Activated CD4-positive, alpha-beta T cell treated with anti-CD3 and anti-CD28 coated beads for 36 hours (primary cell): ENCODE measurements at regions of chr3 and their contacts with region 1.

Region 1: DNA sequence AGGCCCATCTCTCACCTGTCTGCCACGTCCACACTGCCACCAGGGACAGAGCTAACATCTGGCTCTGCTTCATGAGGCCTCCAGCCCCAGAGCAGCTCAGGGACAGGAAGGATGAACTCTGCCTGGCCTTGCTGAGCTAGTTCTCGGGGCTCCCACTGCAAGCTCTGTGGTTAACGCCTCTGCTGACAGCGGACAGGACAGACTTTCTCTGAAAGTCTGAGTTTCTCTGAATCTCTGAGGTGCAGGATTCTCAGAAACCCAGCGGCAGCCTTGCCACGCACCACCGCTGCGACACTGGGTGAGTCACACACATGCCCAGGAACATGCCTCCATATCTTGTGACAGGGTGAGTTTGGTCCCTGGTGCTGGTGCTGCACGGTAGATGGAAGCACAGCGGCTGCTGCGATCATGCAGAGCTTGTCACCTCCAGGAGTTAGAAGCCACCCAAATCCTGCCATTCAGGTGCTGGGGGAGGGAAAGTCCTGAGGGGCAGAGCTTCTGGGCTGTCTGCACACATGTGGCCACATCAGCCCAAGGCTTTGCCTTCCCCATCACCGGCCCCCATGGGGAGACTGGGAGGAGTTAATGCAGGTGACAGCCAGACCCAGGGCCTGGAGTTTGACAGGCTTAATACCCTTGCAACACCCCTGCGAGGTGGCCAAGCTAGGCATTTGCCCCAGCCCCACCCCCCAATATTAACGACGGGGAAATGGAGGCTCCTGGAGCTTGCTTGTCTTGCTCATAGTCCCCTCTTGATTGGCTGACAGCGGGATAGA is 267.0 kb downstream of the PLCL2 start:
- DNase-seq: peak; percentile 94
- ATAC-seq: peak; percentile 94
- H3K4me3 Mint-ChIP-seq: peak overlapping the region; percentile 52
- H3K27ac Mint-ChIP-seq: peak overlapping the region; percentile 88
- H3K4me1 Mint-ChIP-seq: peaks cover 29% of the 10 kb centered on the region
- H3K27me3 Mint-ChIP-seq: no peaks in the 10 kb centered on the region

Region 2: DNA sequence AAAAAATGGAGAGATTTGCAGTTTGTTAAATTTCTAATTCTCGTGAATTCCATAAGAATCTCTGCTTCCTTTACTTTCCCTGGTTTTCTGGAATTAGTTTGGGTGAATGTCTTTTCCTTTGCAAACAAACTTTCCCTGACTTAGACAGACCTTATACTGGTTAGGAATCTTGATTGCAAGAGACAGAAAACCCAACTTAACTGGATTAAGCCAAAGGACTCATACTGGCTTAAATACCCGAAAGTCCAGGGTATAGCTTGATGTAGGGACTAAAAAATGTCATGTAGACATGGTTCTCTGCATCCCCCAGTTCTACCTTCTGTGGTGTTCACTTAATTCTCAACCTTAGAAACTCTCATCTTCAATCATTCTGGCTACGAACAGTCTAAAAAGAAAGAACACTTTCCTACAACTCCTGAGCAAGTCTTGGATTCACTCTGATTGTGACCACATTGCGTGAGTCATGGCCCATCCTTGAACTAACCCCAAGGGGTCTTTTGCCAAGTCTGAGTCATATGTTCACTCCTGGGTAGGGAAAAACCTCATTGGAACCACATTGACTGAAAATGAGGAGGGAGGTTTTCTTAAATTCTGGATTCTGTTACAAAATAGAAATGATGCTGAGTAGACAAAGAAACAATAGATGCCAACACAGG is 410.6 kb before region 1 on chr3:
- CTCF ChIA-PET with region 1: no interaction called
- POLR2A ChIA-PET with region 1: no interaction called
- intact Hi-C with region 1: loop called in 1 of 2 experiments (anchors 5 kb)
- DNase-seq: peak; percentile 65
- ATAC-seq: peak; percentile 79
- H3K4me3 Mint-ChIP-seq: no peak overlapping the region
- H3K27ac Mint-ChIP-seq: no peak overlapping the region
- H3K4me1 Mint-ChIP-seq: peaks cover 12% of the 10 kb centered on the region
- H3K27me3 Mint-ChIP-seq: peaks cover 2% of the 10 kb centered on the region

Region 3: GRCh38 chr3:16828815-16829214 is 323.0 kb before region 1 on chr3:
- CTCF ChIA-PET with region 1: interaction called, 3 read pairs
- POLR2A ChIA-PET with region 1: no interaction called
- intact Hi-C with region 1: loop called in 1 of 2 experiments (anchors 1 kb)
- DNase-seq: peak; percentile 73
- ATAC-seq: peak; percentile 51
- H3K4me3 Mint-ChIP-seq: no peak overlapping the region
- H3K27ac Mint-ChIP-seq: no peak overlapping the region
- H3K4me1 Mint-ChIP-seq: peaks cover 16% of the 10 kb centered on the region
- H3K27me3 Mint-ChIP-seq: no peaks in the 10 kb centered on the region

Region 4: GRCh38 chr3:16842272-16843270 is 309.2 kb before region 1 on chr3:
- CTCF ChIA-PET with region 1: no interaction called
- POLR2A ChIA-PET with region 1: no interaction called
- intact Hi-C with region 1: loop called in 1 of 2 experiments (anchors 1 kb)
- DNase-seq: peak; percentile 87
- ATAC-seq: peak; percentile 96
- H3K4me3 Mint-ChIP-seq: peak overlapping the region; percentile 69
- H3K27ac Mint-ChIP-seq: peak overlapping the region; percentile 95
- H3K4me1 Mint-ChIP-seq: peaks cover 75% of the 10 kb centered on the region
- H3K27me3 Mint-ChIP-seq: no peaks in the 10 kb centered on the region

Region 5: DNA sequence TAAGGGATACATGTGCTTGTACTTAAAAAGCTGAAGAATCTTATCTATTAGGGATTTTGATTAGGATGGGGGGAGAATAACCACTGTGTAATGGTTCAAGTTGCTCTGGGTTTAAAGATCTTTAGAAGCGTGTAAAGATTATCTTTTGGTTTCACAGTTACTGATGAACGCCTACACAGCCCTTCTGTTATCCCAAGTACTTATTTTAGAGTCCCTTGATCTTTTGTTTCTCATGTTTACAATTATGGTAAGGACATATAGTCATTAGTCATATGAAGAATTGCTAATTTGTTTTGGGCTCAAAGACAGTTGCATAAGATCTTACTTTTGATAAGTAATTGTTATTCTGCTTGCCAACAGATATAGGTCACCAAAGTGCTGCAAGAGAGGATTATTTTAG is 106.9 kb before region 1 on chr3:
- CTCF ChIA-PET with region 1: no interaction called
- POLR2A ChIA-PET with region 1: no interaction called
- intact Hi-C with region 1: loop called in 1 of 2 experiments (anchors 5 kb)
- DNase-seq: no peak
- ATAC-seq: peak; percentile 73
- H3K4me3 Mint-ChIP-seq: no peak overlapping the region
- H3K27ac Mint-ChIP-seq: no peak overlapping the region
- H3K4me1 Mint-ChIP-seq: peaks cover 26% of the 10 kb centered on the region
- H3K27me3 Mint-ChIP-seq: no peaks in the 10 kb centered on the region

Region 6: DNA sequence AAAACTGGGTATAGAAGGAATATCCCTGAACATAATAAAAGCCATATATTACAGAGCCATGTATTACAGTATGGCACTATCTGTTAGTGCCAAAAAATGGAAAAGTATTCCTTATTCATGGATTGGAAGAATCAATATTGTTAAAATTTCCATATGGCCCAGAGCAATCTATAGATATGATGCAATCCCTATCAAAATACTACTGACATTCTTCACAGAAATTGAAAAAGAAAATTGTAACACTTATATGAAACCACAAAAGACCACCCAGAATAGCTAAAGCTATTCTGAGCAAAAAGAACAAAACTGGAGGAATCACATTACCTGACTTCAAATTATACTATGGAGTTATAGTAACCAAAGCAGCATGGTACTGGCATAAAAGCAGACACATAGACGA is 48.2 kb before region 1 on chr3:
- CTCF ChIA-PET with region 1: no interaction called
- POLR2A ChIA-PET with region 1: no interaction called
- intact Hi-C with region 1: no loop called
- DNase-seq: no peak
- ATAC-seq: no peak
- H3K4me3 Mint-ChIP-seq: no peak overlapping the region
- H3K27ac Mint-ChIP-seq: no peak overlapping the region
- H3K4me1 Mint-ChIP-seq: peaks cover 3% of the 10 kb centered on the region
- H3K27me3 Mint-ChIP-seq: no peaks in the 10 kb centered on the region

Region 7: DNA sequence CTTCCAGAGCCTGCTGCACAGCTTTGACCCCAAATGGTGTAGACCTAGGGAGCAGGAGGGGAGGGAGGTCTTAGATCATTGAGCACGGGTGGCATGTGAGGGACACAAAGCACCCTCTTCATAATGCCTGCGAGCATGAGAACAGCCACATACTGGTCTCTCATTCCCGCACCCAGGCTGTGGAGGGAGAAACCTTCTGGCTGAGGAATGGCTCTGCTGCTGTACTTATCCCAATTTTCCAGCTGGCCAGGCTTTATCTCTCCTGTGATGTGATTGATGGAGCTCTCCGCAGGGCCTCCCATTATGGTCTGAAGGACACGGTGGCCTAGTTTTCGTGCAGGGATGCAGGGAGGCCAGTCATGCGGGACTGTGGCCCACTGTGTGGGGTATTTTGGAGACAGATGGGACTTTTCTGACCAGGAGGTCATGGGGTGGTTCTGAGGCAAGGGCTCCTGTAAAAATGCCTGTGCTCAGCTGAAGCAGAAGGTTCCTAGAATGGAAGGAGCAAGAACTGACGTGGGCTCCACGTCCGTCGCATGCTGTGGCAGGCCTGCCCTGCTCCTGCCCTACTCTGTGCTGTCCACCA is 15.6 kb before region 1 on chr3:
- CTCF ChIA-PET with region 1: no interaction called
- POLR2A ChIA-PET with region 1: no interaction called
- intact Hi-C with region 1: no loop called
- DNase-seq: no peak
- ATAC-seq: no peak
- H3K4me3 Mint-ChIP-seq: no peak overlapping the region
- H3K27ac Mint-ChIP-seq: no peak overlapping the region
- H3K4me1 Mint-ChIP-seq: no peaks in the 10 kb centered on the region
- H3K27me3 Mint-ChIP-seq: no peaks in the 10 kb centered on the region

Region 8: GRCh38 chr3:17233398-17233800 is 81.6 kb after region 1 on chr3:
- CTCF ChIA-PET with region 1: no interaction called
- POLR2A ChIA-PET with region 1: no interaction called
- intact Hi-C with region 1: loop called in 1 of 2 experiments (anchors 5 kb)
- DNase-seq: peak; percentile 47
- ATAC-seq: peak; percentile 91
- H3K4me3 Mint-ChIP-seq: no peak overlapping the region
- H3K27ac Mint-ChIP-seq: no peak overlapping the region
- H3K4me1 Mint-ChIP-seq: peaks cover 24% of the 10 kb centered on the region
- H3K27me3 Mint-ChIP-seq: no peaks in the 10 kb centered on the region